HEK293 (cell line): ENCODE measurements at regions of chr17 and their contacts with region 1.

Region 1: GRCh38 chr17:13031718-13032350 is 14.0 kb upstream of the ELAC2 start:
- H3K4me3 ChIP-seq: no peak overlapping the region
- H3K27ac ChIP-seq: no peak overlapping the region
- H3K4me1 ChIP-seq: no peaks in the 10 kb centered on the region
- CTCF ChIP-seq: no peak

Region 2: DNA sequence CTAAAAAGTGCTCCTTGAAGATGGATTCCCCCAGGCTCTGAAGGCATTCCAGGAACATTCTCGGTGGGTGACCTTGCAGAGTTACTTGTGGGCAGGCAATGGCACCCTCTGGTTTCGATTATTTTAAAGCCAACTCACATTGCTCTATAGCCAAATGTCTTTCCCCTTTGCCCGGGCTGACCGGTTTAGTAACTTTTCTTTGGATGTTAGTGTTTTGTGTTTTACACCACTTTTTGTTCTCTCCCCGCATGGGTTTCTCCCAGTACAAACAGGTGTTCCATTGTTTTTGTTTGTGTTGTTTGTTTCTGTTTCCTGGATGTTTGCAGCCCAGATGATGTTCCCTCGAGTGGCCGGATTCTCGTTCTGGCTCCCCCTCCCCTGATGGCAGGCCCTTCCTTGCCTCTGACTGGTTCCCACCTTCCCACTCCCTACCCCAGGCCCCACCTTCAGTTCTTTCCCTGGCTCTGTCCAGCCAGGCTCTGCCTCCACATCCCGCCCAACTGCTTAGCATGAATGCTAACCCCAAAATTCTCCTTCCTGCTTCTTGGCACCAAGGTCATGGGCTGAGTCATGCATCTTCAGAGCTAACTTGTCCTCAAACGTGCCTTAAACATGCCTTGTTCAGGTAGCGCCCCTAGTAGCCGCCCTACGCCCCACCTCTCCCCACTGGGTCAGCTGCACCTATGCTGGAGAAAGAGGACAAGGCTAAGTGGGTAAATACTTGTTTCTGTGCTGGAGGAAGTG is 54.7 kb before region 1 on chr17:
- CTCF ChIA-PET with region 1: no interaction called
- POLR2A ChIA-PET with region 1: no interaction called
- H3K4me3 ChIP-seq: no peak overlapping the region
- H3K27ac ChIP-seq: no peak overlapping the region
- H3K4me1 ChIP-seq: no peaks in the 10 kb centered on the region
- CTCF ChIP-seq: no peak

Region 3: DNA sequence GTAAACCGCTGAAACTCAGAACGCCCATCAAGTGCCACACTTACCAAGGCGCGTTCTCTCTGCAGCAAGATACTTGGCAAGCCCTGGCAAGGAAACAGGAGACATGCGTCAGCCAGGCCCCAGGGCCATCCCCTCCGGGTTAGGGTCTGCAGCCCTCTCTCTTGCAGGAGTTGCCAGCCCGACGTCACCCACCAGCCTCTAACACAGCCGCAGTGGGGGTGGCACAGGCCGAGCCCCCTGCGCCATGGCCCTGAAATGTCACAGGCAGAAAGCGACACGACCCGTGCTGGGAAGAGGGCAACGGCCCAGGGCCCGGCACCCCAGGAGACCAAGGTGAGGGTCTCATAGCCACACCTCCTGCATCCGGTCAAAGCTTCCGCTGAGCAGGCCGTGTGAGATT is 35.9 kb before region 1 on chr17:
- CTCF ChIA-PET with region 1: no interaction called
- POLR2A ChIA-PET with region 1: no interaction called
- H3K4me3 ChIP-seq: no peak overlapping the region
- H3K27ac ChIP-seq: no peak overlapping the region
- H3K4me1 ChIP-seq: no peaks in the 10 kb centered on the region
- CTCF ChIP-seq: no peak

Region 4: GRCh38 chr17:13017659-13018459 is 14.0 kb before region 1 on chr17 and contains the start of gene ELAC2:
- CTCF ChIA-PET with region 1: interaction called, 137 read pairs
- POLR2A ChIA-PET with region 1: interaction called, 26 read pairs
- H3K4me3 ChIP-seq: peak within 1 kb of the TSS; percentile 81
- H3K27ac ChIP-seq: peak within 1 kb of the TSS; percentile 78
- H3K4me1 ChIP-seq: peaks cover 6% of the 10 kb centered on the region; the same call in 1 of the 2 replicates
- CTCF ChIP-seq: peak; percentile 82

Region 5: DNA sequence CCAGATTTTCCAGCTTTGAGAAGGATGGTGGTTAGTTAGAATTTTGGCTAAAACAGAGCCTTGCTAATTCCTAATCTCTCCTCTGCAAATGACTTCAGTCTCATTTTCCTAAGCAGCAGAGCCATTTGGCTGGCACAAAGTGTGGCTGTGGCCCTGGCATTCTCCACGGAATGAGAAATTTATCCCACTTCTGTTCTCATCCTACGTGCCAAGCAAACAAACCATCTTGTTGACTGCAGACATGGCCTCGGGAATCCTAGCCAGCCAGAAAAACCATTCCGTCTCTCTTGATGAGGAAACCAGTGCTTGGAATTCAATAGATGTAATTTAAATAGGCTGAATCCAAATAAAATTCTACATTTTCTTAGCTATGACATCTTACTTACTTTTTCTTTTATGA is 20.1 kb after region 1 on chr17:
- CTCF ChIA-PET with region 1: interaction called, 89 read pairs
- POLR2A ChIA-PET with region 1: no interaction called
- H3K4me3 ChIP-seq: no peak overlapping the region
- H3K27ac ChIP-seq: no peak overlapping the region
- H3K4me1 ChIP-seq: no peaks in the 10 kb centered on the region; the same call in 1 of the 2 replicates
- CTCF ChIP-seq: no peak

Region 6: DNA sequence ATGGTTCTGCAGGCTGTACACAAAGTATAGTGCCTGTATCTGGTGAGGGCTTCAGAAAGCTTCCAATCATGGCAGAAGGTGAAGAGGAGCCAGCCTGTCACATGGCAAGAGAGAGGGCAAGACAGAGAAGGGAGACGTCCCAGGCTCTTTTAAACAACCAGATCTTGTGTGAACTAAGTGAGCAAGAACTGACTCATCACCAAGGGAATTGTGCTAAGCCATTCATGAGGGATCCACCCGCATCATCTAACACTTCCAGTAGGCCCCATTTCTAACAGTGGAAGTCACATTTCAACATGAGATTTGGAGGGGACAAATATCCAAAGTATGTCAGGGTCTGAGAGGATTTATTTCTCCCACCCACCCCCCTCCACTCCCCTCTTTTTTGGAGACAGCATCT is 42.2 kb after region 1 on chr17:
- CTCF ChIA-PET with region 1: interaction called, 10 read pairs
- POLR2A ChIA-PET with region 1: no interaction called
- H3K4me3 ChIP-seq: no peak overlapping the region
- H3K27ac ChIP-seq: no peak overlapping the region
- H3K4me1 ChIP-seq: no peaks in the 10 kb centered on the region
- CTCF ChIP-seq: no peak

Region 7: DNA sequence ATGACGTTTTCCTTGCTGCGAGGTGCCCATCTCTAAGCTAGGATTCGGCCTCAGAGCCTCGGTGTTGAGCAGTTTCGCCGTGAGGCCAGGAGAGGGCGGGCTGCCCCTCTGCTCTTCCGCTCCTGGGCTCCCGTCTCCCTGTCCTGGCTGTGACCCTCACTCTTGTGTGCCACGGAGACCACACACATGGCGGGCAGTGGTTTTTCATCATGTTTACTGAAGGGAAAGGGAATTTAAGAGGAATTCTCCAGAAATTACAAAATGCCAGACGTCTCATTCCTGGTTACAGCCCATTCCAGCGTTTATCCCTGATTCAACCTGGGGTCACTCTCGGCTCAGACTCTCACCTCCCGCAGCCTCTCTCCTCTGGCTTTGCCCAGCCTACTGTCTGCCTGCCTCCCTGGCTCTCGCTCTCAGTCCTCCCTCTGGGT is 82.8 kb after region 1 on chr17:
- CTCF ChIA-PET with region 1: interaction called, 23 read pairs
- POLR2A ChIA-PET with region 1: no interaction called
- H3K4me3 ChIP-seq: peak overlapping the region; percentile 19
- H3K27ac ChIP-seq: no peak overlapping the region
- H3K4me1 ChIP-seq: no peaks in the 10 kb centered on the region
- CTCF ChIP-seq: peak; percentile 72